ENCODE measurements at regions of chr9 and their contacts with region 1.

Region 1: GRCh38 chr9:33264473-33265177 is at the starts of genes BAG1 and CHMP5:
- DNase-seq: peak; percentile 97
- H3K4me3 ChIP-seq: peak within 1 kb of the TSS; percentile 56 to 97
- H3K27ac ChIP-seq: peak within 1 kb of the TSS; percentile 58 to 79; a peak in 3 of 4 replicates
- H3K4me1 ChIP-seq: peaks cover 8 to 15% of the 10 kb centered on the region in 2 experiments; a peak in 3 of 4 replicates
- H3K27me3 ChIP-seq: no peaks in the 10 kb centered on the region
- CTCF ChIP-seq: peak; percentile 29
- EP300 ChIP-seq: no peak
- RAD21 ChIP-seq: no peak
- polyA plus RNA-seq, gene BAG1: 40.0 and 49.9 TPM in 2 replicates
- polyA plus RNA-seq, gene CHMP5: 88.3 and 112 TPM in 2 replicates

Region 2: GRCh38 chr9:33239921-33240320 is 24.7 kb before region 1 on chr9 and contains the start of gene SPINK4:
- CTCF ChIA-PET with region 1: interaction called, 10 read pairs
- POLR2A ChIA-PET with region 1: interaction called, 3 read pairs
- DNase-seq: peak; percentile 78
- H3K4me3 ChIP-seq: no peak within 1 kb of the TSS
- H3K27ac ChIP-seq: peak within 1 kb of the TSS in 1 of 2 experiments; percentile 51; a peak in 2 of 4 replicates
- H3K4me1 ChIP-seq: peaks cover 0 to 14% of the 10 kb centered on the region in 2 experiments; a peak in 1 of 4 replicates
- H3K27me3 ChIP-seq: no peaks in the 10 kb centered on the region
- CTCF ChIP-seq: no peak
- EP300 ChIP-seq: peak in 1 of 2 experiments; percentile 87; a peak in 2 of 4 replicates
- RAD21 ChIP-seq: no peak; the same call in 1 of the 2 replicates
- polyA plus RNA-seq, gene SPINK4: not detected in 2 replicates

Region 3: DNA sequence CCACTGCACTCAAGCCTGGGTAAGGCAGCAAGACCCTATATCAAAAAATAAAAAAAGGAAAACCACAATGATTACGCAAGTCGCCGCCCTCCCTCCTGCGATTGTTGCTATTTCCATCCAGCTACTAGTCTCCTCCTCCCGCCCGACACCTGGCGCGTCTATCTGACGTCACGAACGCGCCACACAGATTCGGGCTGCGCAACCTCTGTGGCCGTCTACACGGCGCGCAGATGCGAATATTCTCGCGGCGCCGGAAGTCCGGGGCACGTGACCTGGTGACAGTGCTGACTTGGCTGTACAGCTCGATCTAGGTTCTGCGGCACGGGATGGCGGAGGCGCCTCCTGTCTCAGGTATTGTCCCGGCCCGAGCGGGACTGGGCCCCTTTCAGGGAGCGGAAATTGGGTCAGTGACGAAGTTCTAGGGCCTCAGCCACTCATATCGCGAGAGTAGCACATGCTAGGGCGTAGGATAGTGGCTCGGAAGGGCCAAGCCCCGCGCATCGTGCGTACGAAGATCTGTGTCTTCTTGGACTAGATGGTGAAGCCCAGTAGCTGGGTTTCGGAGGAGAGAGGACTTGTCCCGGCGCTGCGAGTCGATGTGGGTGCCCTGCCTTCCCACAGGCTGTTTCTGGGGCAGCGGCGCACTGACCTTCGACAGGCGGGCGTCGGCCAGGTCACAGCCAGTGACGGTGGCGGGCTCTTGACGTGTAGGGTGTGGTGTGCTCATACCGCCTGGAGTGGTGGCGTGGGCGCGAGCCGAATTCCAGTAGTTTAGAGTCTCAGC is 25.8 kb after region 1 on chr9 and contains the start of gene NFX1:
- CTCF ChIA-PET with region 1: interaction called, 5 read pairs
- POLR2A ChIA-PET with region 1: interaction called, 10 read pairs
- DNase-seq: peak; percentile 94
- H3K4me3 ChIP-seq: peak within 1 kb of the TSS; percentile 80 to 83
- H3K27ac ChIP-seq: peak within 1 kb of the TSS; percentile 94 to 98
- H3K4me1 ChIP-seq: peaks cover 0 to 11% of the 10 kb centered on the region in 2 experiments; a peak in 2 of 4 replicates
- H3K27me3 ChIP-seq: no peaks in the 10 kb centered on the region
- CTCF ChIP-seq: no peak
- EP300 ChIP-seq: peak in 1 of 2 experiments; percentile 53; a peak in 2 of 4 replicates
- RAD21 ChIP-seq: no peak
- polyA plus RNA-seq, gene NFX1: 19.6 and 27.6 TPM in 2 replicates